Sigmoid colon (tissue), 7 donors: ENCODE measurements at regions of chr10 and their contacts with region 1.

Region 1: DNA sequence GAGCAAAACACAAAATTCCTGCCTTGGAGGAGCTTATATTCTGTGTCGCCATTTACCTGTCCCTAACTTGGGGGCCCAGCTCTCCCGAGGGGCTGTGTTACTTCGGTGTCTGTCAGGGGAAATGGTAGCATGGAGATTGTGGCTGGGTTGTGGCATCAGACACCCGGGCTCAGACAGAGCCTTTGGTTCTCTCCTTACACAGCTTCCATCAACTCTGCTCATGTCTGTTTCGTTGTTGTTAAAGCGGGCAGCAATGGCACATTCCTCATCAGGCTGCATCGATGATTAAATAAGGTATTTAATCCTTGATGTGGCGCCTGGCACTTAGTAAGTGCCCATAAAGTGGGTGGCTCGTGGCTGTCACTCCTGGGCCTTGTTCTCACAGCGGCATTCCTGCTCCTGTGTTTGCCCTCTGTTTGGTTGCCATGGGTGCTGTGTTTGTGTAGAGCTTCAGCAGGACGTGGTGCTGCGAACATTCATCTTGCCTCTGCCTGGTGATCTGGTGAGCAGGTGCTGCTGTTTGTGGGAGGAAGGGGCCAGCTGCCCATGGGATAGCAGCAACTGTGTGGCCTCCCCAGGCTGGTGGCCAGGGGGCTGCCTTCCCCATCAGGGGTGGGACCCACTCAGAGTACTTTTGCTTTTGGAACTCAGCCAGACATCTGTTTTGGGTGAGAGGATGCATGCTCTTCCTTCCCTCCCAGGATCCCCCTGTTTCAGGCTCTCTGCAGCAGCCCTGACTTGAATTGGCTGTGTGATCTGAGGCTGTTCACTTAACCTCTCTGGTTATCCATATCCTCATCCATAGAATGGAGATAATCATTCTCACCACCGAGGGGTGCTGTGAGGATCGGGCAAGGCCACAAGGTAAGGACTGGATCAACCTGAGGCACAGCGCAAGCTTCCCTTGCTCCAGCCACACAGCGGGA is 207.2 kb upstream of the SVIL start:
- DNase-seq: peak; percentile 96
- H3K4me3 ChIP-seq: peak overlapping the region; percentile 27 to 46 (median 36)
- H3K27ac ChIP-seq: peak overlapping the region; percentile 88 to 97 (median 96)
- H3K4me1 ChIP-seq: peaks cover 0 to 74% (median 53%) of the 10 kb centered on the region in 4 donors
- H3K27me3 ChIP-seq: no peaks in the 10 kb centered on the region
- CTCF ChIP-seq: no peak
- EP300 ChIP-seq: peak; percentile 88 to 99 (median 96)
- POLR2A ChIP-seq: peak; percentile 16 to 46

Region 2: GRCh38 chr10:29795850-29796249 is 46.1 kb before region 1 on chr10:
- intact Hi-C with region 1: loop called (anchors 5 kb)
- DNase-seq: no peak
- H3K4me3 ChIP-seq: peak overlapping the region in 1 of 4 donors; percentile 1
- H3K27ac ChIP-seq: peak overlapping the region; percentile 83 to 94 (median 90)
- H3K4me1 ChIP-seq: peaks cover 0 to 56% (median 55%) of the 10 kb centered on the region in 4 donors
- H3K27me3 ChIP-seq: no peaks in the 10 kb centered on the region
- CTCF ChIP-seq: no peak
- EP300 ChIP-seq: no peak
- POLR2A ChIP-seq: no peak

Region 3: GRCh38 chr10:29811751-29812449 is 30.1 kb before region 1 on chr10:
- intact Hi-C with region 1: loop called (anchors 1 kb)
- DNase-seq: peak; percentile 93
- H3K4me3 ChIP-seq: peak overlapping the region in 1 of 4 donors; percentile 4
- H3K27ac ChIP-seq: peak overlapping the region; percentile 93 to 97 (median 96)
- H3K4me1 ChIP-seq: peaks cover 0 to 66% (median 59%) of the 10 kb centered on the region in 4 donors
- H3K27me3 ChIP-seq: no peaks in the 10 kb centered on the region
- CTCF ChIP-seq: no peak
- EP300 ChIP-seq: peak; percentile 86 to 98 (median 96)
- POLR2A ChIP-seq: peak in 1 of 2 donors; percentile 24